Thyroid gland (tissue), 4 donors: ENCODE measurements at regions of chr17 and their contacts with region 1.

Region 1: DNA sequence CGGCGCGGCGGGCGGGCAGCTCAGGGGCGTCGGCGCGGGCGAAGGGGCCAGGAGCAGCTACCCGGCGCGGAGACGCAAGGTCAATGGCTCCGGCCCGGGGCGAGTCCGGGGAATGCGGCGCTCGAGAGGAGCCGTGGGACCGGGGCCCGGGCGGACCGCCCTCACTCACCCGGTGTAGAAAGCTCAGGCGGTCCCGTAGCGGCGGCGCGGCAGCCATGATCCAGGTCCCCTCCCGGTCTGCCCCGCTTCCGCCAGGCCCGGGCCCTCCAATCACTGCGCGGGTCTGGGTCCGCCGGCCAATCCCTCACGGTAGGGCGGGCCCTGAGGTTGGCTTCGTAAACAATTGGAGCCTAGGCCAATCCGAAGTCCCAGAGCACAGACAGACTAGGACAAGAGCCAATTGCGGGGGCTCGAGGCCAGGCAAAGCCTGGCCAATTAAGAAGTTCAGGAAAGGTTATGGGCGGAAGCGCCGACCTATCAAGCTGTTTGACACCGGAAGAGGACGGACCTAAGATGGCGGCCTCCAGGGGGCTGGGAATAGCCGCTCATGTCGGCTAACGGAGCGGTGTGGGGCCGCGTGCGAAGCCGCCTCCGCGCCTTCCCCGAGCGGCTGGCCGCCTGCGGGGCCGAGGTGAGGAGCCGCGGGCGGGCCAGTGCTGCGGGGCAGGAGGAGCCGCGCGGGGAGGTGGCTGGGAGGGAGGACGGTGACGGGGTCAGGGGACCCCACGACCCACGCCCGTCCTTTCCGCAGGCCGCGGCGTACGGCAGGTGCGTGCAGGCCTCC is at the starts of genes NDUFAF8 and TEPSIN:
- DNase-seq: peak; percentile 98 to 99
- H3K4me3 ChIP-seq: peak within 1 kb of the TSS; percentile 79 to 98 (median 85)
- H3K27ac ChIP-seq: peak within 1 kb of the TSS; percentile 65 to 74 (median 72)
- H3K4me1 ChIP-seq: peaks cover 20 to 22% of the 10 kb centered on the region in 2 donors
- H3K27me3 ChIP-seq: no peaks in the 10 kb centered on the region
- CTCF ChIP-seq: no peak
- POLR2A ChIP-seq: peak in 1 of 2 donors; percentile 73
- total RNA-seq, gene NDUFAF8: 17.0 to 107 (median 53.7) TPM
- total RNA-seq, gene TEPSIN: 37.9 to 82.2 (median 64.9) TPM

Region 2: DNA sequence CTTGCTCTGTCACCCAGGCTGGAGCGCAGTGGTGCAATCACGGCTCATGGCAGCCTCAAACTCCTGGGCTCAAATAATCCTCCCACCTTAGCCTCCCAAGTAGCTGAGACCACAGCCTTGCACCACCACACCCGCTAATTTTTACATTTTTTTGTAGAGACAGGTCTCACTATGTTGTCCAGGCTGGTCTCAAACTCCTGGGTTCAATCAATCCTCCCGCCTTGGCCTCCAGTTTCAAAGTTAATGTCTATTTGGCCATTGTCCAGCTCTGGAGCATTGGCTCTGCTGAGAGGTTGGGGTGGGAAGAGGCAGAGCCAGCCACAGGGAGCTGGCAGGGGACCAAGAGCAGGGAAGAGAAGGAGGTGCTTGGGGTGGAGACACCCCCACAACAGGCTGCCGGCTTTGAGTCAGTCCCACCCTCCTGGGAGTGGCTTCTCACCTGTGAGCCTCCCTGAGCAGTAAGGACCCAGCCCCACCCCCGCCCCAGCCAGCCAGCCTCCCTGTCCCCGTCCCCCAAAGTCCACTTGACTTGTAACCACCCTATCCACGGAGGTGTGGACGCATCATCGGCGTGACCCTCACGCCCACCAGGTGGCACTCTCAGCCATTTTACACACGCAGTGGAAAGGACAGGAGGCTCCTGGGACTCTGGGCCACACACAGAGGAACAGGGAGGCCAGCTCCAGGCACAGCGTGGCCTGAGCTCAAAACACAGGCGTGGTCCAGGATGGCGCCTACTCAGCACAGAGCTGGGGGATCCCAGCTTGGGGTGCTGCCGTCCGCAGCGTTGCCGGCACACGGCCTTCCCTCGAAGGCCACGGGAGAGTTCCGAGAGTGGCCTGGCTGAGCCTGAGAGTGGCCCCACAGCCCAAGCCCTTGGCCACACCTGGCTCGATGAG is 96.5 kb before region 1 on chr17:
- intact Hi-C with region 1: loop called (anchors 5 kb)
- DNase-seq: peak; percentile 81 to 84
- H3K4me3 ChIP-seq: no peak overlapping the region
- H3K27ac ChIP-seq: no peak overlapping the region
- H3K4me1 ChIP-seq: peaks cover 0 to 9% of the 10 kb centered on the region in 2 donors
- H3K27me3 ChIP-seq: no peaks in the 10 kb centered on the region
- CTCF ChIP-seq: peak; percentile 39 to 61 (median 49)
- POLR2A ChIP-seq: no peak

Region 3: DNA sequence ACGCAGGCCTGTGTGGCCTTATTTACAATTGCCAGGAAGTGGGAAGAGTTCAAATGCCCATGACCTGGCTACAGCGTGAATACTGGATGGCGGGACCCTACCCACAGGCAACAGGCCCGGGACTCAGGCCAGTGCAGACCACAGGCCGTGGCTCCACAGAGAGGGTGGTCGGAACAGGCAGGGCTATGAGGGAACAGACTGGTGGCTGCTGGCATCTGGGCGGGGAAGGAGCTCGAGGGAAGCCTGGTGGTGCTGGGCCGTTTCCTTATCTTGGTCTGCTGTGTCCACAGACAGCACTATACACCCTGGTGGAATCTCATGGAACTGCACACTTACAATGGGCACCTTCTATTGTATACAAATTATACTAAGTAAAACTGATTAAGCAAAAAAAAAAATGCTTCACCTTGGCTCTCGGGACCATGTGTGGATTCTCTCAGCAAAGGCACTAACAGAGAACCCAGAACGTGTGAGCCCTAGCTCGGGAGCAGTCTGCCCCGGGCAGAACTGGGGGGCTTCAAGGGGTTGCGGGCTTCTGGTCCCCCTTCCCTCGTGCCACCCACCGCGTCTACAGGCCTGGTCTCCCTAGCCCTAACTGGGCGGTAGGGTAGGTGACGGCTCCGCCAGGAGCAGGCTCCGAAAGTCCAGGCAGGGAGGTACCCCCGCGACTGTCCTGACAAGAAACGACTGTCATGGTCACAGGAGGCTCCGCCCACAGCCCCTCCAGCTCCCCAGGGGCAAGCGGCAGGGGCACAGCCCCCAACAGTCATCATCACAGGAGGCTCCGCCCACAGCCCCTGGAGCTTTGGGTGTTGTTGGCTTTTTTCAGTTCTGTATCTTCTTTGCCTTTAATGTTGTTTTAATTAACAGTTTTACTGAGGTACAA is 38.1 kb before region 1 on chr17:
- intact Hi-C with region 1: no loop called
- DNase-seq: peak in 1 of 2 donors; percentile 23
- H3K4me3 ChIP-seq: no peak overlapping the region
- H3K27ac ChIP-seq: no peak overlapping the region
- H3K4me1 ChIP-seq: no peaks in the 10 kb centered on the region
- H3K27me3 ChIP-seq: no peaks in the 10 kb centered on the region
- CTCF ChIP-seq: peak in 5 of 6 experiments; percentile 25 to 44 (median 32)
- POLR2A ChIP-seq: no peak